Activated T-helper 1 cell treated with anti-CD3 and anti-CD28 coated beads, Interleukin-12 subunit alpha, Interleukin-12 subunit beta, Interleukin-2, Interleukin-4 antibody, amounts not matched to agents 30 ng/mL and 10 ng/mL and 1 ng/mL, durations not matched to agents 14 hours and 24 hours and 36 hours (primary cell): ENCODE measurements at regions of chr1 and their contacts with region 1.

Region 1: GRCh38 chr1:232630047-232630893 is at the start of gene SIPA1L2:
- DNase-seq: peak; percentile 87
- H3K4me3 Mint-ChIP-seq: peak within 1 kb of the TSS; percentile 90
- H3K27ac Mint-ChIP-seq: peak within 1 kb of the TSS; percentile 61
- H3K4me1 Mint-ChIP-seq: peaks cover 38% of the 10 kb centered on the region
- H3K27me3 Mint-ChIP-seq: peaks cover 49% of the 10 kb centered on the region
- total RNA-seq, gene SIPA1L2: 2.3 and 2.6 TPM in 2 replicates

Region 2: DNA sequence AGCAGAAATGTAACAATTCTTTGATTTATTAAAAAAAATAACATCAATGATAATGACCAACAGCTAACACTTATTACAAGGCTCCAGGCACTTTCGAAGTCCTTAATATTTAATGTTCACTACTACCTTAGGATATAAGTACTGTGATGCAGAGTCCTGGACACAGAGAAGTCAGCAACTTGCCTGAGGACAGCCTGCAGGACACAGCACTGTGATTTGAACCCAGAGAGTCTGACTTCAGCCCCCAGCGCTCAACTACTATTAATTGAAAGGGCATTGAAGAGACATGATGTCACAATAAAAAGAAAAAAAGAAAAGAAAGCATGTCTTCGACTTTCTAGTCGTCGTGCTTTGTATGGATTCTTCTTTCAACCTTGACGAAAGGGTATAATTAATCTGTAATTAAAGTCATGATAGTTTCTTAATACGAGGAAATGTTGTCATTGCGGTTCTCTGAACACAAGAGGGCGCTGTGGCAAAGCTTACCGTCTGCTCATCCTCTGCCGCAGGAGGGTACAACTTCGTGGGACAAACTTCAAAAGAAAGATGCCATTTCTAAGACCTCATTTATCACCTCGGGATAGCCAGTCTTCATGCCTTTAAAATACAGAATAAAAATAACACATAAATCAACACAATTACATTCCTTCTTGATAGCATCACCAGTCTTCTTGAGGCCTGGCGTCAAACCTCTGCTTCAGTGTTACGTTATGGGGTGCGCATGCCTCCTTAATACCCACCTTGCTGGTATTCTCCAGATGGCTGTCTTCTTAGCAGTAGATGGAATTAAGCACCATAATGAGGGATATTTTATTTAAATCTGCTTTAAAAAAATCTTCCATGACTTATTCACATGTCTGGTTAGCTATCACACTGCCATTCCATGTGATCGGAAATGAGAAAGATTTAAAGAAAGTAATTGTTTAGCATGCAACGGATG is 763.6 kb before region 1 on chr1:
- intact Hi-C with region 1: loop called (anchors 1 kb)
- DNase-seq: peak; percentile 13
- H3K4me3 Mint-ChIP-seq: no peak overlapping the region
- H3K27ac Mint-ChIP-seq: no peak overlapping the region
- H3K4me1 Mint-ChIP-seq: peaks cover 6% of the 10 kb centered on the region
- H3K27me3 Mint-ChIP-seq: no peaks in the 10 kb centered on the region

Region 3: DNA sequence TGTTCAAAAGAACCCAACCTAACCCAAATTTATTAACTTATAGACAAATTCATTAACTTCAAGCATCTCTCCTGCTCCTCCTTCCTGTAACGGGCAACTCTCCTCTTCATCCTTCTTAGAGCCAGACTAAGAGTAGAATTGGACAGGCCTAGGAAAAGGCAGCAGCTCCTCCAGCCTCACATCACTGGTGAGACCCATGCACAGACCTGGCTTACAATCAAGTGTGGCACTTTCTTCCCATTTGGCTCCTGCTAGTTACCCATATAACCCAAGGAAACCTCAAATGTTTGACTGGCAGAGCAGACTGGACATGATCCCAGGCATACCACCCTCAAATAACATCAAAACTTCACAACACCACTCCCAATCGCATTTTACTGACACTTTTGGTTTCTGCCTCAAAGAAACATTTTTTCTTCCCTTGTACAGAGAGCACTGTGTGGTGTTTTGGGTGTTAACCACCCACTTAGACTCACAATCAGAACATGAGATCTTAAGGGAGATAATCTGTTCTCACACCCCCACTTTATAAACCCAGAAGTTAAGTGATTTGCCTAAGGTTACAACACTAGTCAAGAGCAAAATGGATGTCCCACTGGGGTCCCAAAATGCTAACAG is 101.7 kb before region 1 on chr1:
- intact Hi-C with region 1: loop called (anchors 2 kb)
- DNase-seq: no peak
- H3K4me3 Mint-ChIP-seq: peak overlapping the region; percentile 28
- H3K27ac Mint-ChIP-seq: peak overlapping the region; percentile 14
- H3K4me1 Mint-ChIP-seq: peaks cover 17% of the 10 kb centered on the region
- H3K27me3 Mint-ChIP-seq: peaks cover 21% of the 10 kb centered on the region

Region 4: GRCh38 chr1:232793944-232794343 is 163.7 kb after region 1 on chr1:
- intact Hi-C with region 1: loop called (anchors 5 kb)
- DNase-seq: peak; percentile 4
- H3K4me3 Mint-ChIP-seq: no peak overlapping the region
- H3K27ac Mint-ChIP-seq: no peak overlapping the region
- H3K4me1 Mint-ChIP-seq: peaks cover 16% of the 10 kb centered on the region
- H3K27me3 Mint-ChIP-seq: no peaks in the 10 kb centered on the region

Region 5: DNA sequence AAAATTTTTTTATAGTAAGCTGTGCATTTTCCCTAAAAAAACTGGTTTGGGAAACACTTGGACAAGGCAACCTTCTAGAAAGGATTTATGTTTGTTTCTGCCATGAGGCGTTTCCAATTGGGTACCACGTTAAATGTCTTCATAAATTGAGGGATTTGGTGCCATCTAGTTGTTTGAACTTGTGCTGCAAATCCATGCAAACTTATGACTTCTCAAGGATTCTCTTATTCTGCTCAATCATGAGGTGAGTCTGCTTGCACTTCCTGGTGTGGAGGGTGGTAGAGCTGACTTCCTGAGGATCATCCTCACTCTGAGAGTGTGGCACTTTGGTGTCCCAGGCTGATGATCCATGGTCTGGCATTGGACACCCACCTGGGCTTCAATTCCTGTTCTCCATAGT is 542.0 kb after region 1 on chr1:
- intact Hi-C with region 1: loop called (anchors 10 kb)
- DNase-seq: no peak
- H3K4me3 Mint-ChIP-seq: no peak overlapping the region
- H3K27ac Mint-ChIP-seq: no peak overlapping the region
- H3K4me1 Mint-ChIP-seq: no peaks in the 10 kb centered on the region
- H3K27me3 Mint-ChIP-seq: no peaks in the 10 kb centered on the region